Tibial artery (tissue), 4 donors: ENCODE measurements at regions of chr15 and their contacts with region 1.

Region 1: DNA sequence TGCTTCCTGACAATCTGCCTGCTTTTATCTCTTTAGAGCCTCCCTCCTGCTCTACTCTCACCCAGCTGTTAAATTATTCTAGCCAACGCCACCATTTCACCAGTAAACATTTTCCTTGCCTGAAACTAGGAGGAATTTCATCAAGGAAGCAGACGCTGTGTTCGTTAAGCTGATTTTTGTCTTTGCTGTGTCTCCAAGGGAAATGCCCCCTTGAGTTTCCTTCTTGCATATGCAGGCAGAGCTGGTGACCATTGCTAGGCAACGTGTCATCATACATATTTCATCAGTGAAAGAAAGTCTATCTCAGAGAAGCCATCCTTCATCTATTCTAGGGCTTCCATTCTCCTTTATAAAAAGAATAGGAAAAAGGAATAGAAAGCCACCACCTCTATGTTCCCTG is 87.0 kb upstream of the ST8SIA2 start:
- DNase-seq: no peak
- H3K4me3 ChIP-seq: no peak overlapping the region
- H3K27ac ChIP-seq: no peak overlapping the region
- H3K4me1 ChIP-seq: no peaks in the 10 kb centered on the region
- H3K27me3 ChIP-seq: no peaks in the 10 kb centered on the region
- CTCF ChIP-seq: no peak

Region 2: DNA sequence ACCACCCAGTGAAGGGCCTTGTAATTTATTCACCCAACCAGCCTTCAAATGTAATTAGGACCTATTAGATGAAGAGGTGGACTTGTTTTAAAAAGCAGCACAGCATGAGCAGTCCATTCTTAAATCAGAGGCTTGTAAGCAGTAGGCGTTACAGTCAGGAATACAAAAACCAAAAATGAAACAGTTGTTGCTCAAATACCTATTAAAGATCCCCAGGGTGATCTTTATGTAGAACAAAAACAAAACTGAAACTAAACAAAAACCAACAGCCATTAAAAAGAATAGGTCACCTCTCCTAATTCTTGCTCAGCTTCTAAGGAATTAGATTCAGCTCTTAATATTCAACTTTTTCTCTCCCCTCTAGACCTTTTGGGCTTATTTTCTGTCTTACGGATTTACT is 17.9 kb before region 1 on chr15:
- intact Hi-C with region 1: loop called (anchors 2 kb)
- DNase-seq: no peak
- H3K4me3 ChIP-seq: no peak overlapping the region
- H3K27ac ChIP-seq: no peak overlapping the region
- H3K4me1 ChIP-seq: no peaks in the 10 kb centered on the region
- H3K27me3 ChIP-seq: peaks cover 0 to 2% of the 10 kb centered on the region in 2 donors
- CTCF ChIP-seq: no peak